ENCODE measurements at regions of chr7 and their contacts with region 1.

Region 1: GRCh38 chr7:26200444-26201246 is at the start of gene HNRNPA2B1:
- DNase-seq: peak; percentile 97
- ATAC-seq: peak; percentile 81
- H3K4me3 ChIP-seq: peak within 1 kb of the TSS; percentile 81
- H3K27ac ChIP-seq: peak within 1 kb of the TSS; percentile 100
- H3K4me1 ChIP-seq: 0 out of 2 replicates have a peak, but pooled peaks cover 2% of the 10 kb centered on the region
- H3K27me3 ChIP-seq: no peaks in the 10 kb centered on the region
- CTCF ChIP-seq: no peak
- POLR2A ChIP-seq: peak; percentile 100
- RAD21 ChIP-seq: no peak
- total RNA-seq, gene HNRNPA2B1: 49.3 and 118 TPM in 2 replicates

Region 2: DNA sequence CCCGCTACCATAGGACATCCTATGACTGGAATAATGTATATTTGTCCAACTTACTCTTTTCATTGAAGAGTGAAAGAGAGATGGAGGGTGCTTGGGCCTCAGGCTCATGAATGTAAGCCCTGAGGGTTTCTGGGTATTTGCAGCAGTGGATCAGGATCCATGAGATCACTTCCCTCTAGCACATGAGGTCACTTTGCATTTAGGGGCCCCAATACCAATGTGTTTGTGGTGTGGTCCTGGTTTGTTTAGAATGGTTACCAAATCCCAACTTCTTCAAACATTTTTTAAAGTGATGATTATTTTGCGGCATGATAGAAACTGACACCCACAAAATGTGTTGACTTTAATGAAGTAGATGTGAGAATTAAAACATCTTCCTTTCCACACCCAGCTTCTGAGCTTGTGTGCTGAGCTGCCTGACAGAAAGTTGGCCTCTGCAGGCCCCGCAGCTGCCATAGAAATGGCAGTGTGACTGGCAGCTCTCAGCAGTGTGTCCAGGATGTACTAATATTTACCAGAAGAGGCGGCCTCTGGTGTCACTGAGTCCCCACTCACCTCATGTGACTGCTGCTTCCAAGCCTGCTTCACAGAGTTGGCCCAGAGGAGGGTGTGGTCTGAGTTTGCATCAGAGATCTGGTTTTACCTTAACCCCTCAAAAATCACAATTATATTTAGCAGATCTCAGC is 524.7 kb before region 1 on chr7:
- CTCF ChIA-PET with region 1: no interaction called
- POLR2A ChIA-PET with region 1: no interaction called
- dilution Hi-C with region 1: no loop called
- in situ Hi-C with region 1: no loop called
- intact Hi-C with region 1: no loop called
- DNase-seq: no peak
- ATAC-seq: no peak
- H3K4me3 ChIP-seq: no peak overlapping the region
- H3K27ac ChIP-seq: no peak overlapping the region
- H3K4me1 ChIP-seq: no peaks in the 10 kb centered on the region
- H3K27me3 ChIP-seq: peaks cover 3% of the 10 kb centered on the region; the same call in 1 of the 2 replicates
- CTCF ChIP-seq: no peak
- POLR2A ChIP-seq: no peak
- RAD21 ChIP-seq: no peak

Region 3: DNA sequence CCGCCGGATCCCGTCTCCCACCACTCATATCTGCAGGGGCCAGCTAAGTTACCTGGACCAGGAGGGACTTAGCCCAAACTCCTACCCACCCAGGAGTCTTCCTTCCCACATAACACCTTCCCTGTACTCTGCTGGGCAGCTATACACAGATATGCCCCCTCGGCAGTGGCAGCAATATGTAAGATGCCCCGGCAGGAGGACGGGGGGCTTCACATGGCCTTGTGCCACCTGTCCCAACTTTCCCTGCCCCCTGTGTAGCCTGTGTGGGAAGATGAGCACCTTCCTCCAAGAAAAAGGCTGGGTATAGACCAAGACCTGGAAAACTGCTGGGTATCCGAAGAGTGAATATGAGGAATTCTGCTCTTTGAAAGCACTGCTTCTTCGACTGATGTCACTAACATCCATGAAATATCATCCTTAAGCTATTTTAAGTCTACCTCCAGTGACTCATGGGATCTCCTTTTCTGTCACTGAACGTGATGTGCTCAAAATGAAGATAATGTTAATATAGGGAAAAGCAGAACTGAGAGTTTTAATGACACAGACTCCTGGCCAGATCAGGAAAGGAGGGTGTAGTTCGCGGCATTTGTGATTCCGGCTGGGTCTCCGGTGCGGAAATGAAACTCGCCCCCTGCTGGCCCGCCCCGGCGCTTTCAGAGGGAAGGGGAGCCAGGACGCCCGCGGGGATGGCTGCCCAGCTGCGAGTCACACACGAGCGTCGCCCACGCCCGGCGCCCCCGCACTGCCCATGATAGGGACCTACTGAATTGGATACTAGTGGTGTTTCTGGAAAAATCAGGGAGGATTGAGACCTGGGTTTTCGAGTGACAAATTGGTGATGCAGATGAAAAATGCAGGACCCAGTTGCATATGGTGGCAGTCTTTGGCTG is 305.5 kb before region 1 on chr7:
- CTCF ChIA-PET with region 1: no interaction called
- POLR2A ChIA-PET with region 1: no interaction called
- dilution Hi-C with region 1: no loop called
- in situ Hi-C with region 1: no loop called
- intact Hi-C with region 1: loop called (anchors 5 kb)
- DNase-seq: peak; percentile 2
- ATAC-seq: peak; percentile 69
- H3K4me3 ChIP-seq: peak overlapping the region; percentile 33; the same call in 1 of the 2 replicates
- H3K27ac ChIP-seq: no peak overlapping the region
- H3K4me1 ChIP-seq: no peaks in the 10 kb centered on the region
- H3K27me3 ChIP-seq: peaks cover 25% of the 10 kb centered on the region
- CTCF ChIP-seq: peak; percentile 50
- POLR2A ChIP-seq: no peak
- RAD21 ChIP-seq: no peak

Region 4: DNA sequence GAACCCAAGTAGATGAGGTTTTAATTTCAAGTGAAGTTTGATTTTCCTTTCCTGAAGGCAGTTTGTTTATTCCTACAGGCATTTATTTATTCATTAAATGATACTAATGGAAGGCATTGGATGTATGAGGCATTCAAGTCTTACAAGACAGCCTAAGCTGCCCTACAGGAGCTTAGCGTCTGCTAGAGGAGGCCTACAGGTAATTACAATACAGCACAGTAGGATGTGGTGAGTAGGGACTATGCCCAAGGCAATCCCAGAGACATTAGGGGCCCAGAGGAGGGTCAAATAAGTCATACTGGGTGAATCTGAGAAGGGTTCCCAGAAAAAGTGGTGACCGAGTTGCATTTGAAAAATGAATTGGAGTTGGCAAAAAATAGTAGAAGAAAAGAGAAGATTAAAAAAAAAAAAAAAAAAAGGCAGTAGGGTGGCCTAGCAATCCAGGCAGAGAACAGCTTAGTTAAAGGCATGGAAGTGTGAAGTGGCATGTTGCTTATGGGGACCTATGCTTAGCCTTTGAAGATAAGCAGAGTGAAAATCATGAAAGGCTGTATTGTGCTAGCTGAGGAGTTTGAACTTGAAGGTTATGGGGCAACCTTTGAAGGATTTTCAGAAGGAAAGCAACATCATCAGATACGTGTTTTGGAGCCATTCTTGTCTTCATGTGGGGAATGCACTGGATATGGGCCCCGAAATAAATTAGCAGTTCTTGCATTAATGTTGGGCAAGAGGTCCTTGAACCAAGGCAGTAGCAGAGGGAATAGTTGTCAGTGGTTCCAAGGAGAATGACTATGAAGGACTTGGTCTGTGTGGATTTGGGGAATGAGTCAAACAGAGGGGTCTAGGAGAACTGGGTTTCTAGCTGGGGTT is 156.5 kb after region 1 on chr7:
- CTCF ChIA-PET with region 1: no interaction called
- POLR2A ChIA-PET with region 1: no interaction called
- dilution Hi-C with region 1: no loop called
- in situ Hi-C with region 1: no loop called
- intact Hi-C with region 1: loop called (anchors 5 kb)
- DNase-seq: no peak
- ATAC-seq: no peak
- H3K4me3 ChIP-seq: no peak overlapping the region
- H3K27ac ChIP-seq: no peak overlapping the region
- H3K4me1 ChIP-seq: no peaks in the 10 kb centered on the region
- H3K27me3 ChIP-seq: peaks cover 3% of the 10 kb centered on the region; the same call in 1 of the 2 replicates
- CTCF ChIP-seq: no peak
- POLR2A ChIP-seq: no peak
- RAD21 ChIP-seq: no peak

Region 5: DNA sequence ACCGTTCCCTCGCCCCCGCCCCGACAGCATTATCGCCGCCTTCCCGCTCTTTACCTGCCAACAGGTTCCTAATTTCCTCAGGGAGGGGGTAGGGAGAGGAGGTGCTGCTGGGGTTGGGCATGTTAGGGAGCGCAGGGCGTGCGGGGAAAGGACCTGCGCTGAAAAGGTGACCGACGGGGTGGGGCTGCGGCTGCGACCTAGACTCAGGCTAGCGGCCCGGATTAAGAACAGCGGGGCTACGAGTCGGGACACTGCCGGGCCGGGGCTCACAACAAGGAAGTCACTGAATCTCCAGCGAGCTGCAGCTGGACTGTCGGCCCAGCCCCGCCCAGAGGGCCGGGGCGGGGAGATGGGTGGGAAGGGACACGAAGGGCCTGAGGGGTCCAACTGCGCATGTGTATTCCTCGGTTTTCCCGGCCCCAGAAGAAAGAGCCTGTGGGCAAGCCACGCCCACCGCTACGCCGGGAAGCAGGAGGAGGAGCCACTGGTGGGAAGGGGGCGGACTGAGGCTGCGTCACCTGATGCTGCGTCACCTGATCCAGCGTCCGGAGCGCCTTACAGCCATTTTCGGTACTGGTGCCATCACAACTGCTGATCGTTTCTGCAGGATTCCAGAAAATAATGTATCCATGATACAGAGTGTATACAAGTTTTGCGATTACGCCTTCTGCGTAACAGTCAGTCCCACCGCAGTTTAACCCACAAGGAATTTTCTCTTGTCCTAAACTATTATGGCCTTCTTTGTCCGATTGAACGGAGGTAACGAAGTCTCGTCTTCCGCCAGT is 663.9 kb after region 1 on chr7 and contains the start of gene SKAP2:
- CTCF ChIA-PET with region 1: no interaction called
- POLR2A ChIA-PET with region 1: no interaction called
- dilution Hi-C with region 1: no loop called
- in situ Hi-C with region 1: loop called (anchors 25 kb)
- intact Hi-C with region 1: no loop called
- DNase-seq: peak; percentile 99
- ATAC-seq: peak; percentile 98
- H3K4me3 ChIP-seq: peak within 1 kb of the TSS; percentile 73
- H3K27ac ChIP-seq: peak within 1 kb of the TSS; percentile 77
- H3K4me1 ChIP-seq: no peaks in the 10 kb centered on the region
- H3K27me3 ChIP-seq: no peaks in the 10 kb centered on the region
- CTCF ChIP-seq: no peak
- POLR2A ChIP-seq: peak; percentile 85
- RAD21 ChIP-seq: no peak
- total RNA-seq, gene SKAP2: 5.7 and 11.1 TPM in 2 replicates

Region 6: GRCh38 chr7:27143023-27143949 is 942.6 kb after region 1 on chr7 and contains the start of gene HOXA5:
- CTCF ChIA-PET with region 1: no interaction called
- POLR2A ChIA-PET with region 1: no interaction called
- dilution Hi-C with region 1: no loop called
- in situ Hi-C with region 1: loop called (anchors 10 kb)
- intact Hi-C with region 1: no loop called
- DNase-seq: peak; percentile 100
- ATAC-seq: peak; percentile 64
- H3K4me3 ChIP-seq: peak within 1 kb of the TSS; percentile 93
- H3K27ac ChIP-seq: peak within 1 kb of the TSS; percentile 93
- H3K4me1 ChIP-seq: peaks cover 16% of the 10 kb centered on the region
- H3K27me3 ChIP-seq: no peaks in the 10 kb centered on the region
- CTCF ChIP-seq: peak; percentile 98
- POLR2A ChIP-seq: peak; percentile 89
- RAD21 ChIP-seq: peak; percentile 95
- total RNA-seq, gene HOXA5: 19.9 and 23.9 TPM in 2 replicates